Calu3 (cell line): ENCODE measurements at regions of chr3 and their contacts with region 1.

Region 1: DNA sequence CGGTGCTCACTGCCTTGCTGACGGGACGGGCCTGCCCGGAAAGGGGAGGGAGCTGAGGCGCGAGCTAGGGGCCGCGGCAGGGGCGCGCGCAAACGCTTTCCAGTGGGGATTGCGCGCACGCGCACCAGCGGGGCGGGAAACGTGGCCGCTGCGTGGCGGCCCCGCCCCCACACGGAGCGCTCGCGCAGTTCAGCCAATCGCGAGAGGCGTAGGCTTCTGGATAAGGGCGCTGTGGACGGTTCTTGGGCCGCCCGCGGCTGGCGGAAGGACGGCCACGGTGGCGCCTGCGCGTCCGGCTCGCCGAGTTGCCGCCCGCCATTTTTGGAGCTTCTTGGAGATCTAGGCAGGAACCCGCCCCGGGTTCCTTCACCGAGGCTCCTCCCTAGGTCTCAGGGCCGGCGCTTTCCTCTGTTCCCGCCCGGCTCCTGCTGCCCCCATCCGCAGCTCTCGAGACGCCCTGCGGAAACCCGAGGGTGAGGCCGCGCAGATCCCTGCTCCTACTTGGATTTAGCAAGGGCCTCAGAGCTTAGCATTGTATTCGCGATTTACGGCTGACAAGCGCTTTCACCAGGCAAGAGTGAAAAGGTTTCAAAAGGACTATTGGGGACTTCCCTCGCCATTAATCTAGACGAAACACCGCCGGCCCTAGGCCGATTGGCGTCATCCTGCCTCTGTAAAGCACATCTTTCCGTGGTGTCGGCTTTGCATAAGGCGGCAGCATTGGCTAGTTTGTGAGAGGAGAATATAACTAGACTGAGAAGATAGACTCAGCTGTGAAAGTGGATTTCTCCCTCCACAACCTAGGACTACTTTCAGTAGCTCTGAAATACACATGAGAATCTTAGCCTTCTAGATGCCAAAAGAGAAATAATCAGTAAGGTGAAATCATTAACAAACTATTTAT is 496 bp upstream of the STAG1 start:
- DNase-seq: peak; percentile 100
- H3K4me3 Mint-ChIP-seq: peak overlapping the region; percentile 73
- H3K27ac Mint-ChIP-seq: peak overlapping the region; percentile 67
- H3K4me1 Mint-ChIP-seq: peaks cover 44% of the 10 kb centered on the region
- H3K27me3 Mint-ChIP-seq: no peaks in the 10 kb centered on the region
- CTCF ChIP-seq: no peak

Region 2: DNA sequence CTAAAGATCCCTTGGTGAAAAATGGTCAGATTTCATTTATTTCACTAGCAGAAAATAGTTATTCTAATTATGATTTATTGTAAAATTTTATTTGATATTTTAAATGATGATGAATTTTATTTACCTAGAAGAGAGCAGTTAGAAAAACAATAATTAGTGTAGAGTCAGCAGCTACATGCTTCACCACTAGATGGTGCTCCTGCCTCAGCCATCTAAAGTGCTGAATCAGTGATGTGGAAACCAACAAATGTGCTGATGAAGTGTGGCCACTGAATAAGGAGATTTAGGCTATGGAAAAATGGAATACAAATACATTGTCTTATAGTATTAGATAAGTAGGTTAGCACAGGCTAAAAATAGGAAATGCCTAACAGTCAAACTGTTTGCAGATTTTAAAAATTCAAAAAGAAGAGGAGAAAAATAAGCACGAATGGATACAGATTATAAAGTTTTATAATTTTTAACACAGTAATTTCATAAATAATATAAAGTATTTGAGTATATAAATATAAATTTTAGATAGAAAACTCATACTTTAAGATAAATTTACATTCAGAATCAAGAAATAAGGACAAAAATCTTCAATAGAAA is 677.4 kb before region 1 on chr3:
- CTCF ChIA-PET with region 1: interaction called, 16 read pairs
- intact Hi-C with region 1: loop called (anchors 2 kb)
- DNase-seq: peak; percentile 81
- H3K4me3 Mint-ChIP-seq: no peak overlapping the region
- H3K27ac Mint-ChIP-seq: no peak overlapping the region
- H3K4me1 Mint-ChIP-seq: peaks cover 8% of the 10 kb centered on the region
- H3K27me3 Mint-ChIP-seq: no peaks in the 10 kb centered on the region
- CTCF ChIP-seq: peak; percentile 85

Region 3: DNA sequence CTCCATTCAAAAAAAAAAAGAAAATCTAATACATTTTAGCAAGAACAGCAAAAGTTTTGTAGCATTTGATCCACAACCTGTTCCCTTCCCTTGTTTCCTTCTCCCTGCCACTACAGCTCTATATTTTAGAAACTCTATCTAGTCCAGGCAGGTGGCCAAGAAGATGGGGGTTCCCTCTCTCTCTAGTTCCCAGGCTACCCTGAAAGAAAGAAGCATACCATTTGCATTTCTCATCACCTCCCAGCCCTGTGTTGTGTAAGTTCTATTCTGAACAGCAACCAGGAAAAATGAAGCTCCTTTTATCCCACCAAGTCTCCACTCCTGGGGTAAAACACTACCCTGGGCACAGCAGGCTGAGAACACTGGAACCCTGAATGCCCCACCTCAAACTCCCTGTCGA is 402.5 kb before region 1 on chr3:
- CTCF ChIA-PET with region 1: interaction called, 12 read pairs
- intact Hi-C with region 1: no loop called
- DNase-seq: peak; percentile 50
- H3K4me3 Mint-ChIP-seq: no peak overlapping the region
- H3K27ac Mint-ChIP-seq: no peak overlapping the region
- H3K4me1 Mint-ChIP-seq: peaks cover 19% of the 10 kb centered on the region
- H3K27me3 Mint-ChIP-seq: no peaks in the 10 kb centered on the region
- CTCF ChIP-seq: no peak

Region 4: DNA sequence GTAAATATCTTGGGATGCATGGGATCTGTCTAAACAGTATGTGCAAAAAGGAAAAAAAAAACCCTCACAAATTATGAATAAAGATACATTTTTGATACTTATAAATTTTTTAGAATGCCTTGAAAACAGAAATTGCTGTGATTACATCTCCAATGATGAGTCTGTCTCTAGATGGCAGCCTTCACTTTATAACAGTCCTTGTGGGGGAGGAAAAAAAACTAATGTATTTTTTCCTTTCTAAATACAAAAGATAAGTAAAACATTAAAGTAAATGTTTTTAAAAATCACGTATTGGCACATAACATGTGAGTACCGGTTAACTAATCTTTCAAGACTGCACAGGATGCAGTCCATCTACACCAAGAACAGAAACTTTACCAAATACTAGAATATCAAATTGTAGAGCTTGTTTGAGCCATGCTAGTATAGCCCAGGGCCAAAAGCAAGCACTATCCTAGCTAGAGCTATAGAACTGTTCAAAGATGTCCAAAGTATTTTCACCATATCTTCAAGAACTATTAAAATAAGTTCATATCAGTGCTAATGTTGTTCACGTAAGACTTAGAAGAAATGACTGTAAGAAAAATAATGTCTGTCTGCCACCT is 206.9 kb before region 1 on chr3:
- CTCF ChIA-PET with region 1: interaction called, 170 read pairs
- intact Hi-C with region 1: loop called (anchors 1 kb)
- DNase-seq: peak; percentile 19
- H3K4me3 Mint-ChIP-seq: no peak overlapping the region
- H3K27ac Mint-ChIP-seq: peak overlapping the region; percentile 40
- H3K4me1 Mint-ChIP-seq: peaks cover 31% of the 10 kb centered on the region
- H3K27me3 Mint-ChIP-seq: no peaks in the 10 kb centered on the region
- CTCF ChIP-seq: peak; percentile 36

Region 5: DNA sequence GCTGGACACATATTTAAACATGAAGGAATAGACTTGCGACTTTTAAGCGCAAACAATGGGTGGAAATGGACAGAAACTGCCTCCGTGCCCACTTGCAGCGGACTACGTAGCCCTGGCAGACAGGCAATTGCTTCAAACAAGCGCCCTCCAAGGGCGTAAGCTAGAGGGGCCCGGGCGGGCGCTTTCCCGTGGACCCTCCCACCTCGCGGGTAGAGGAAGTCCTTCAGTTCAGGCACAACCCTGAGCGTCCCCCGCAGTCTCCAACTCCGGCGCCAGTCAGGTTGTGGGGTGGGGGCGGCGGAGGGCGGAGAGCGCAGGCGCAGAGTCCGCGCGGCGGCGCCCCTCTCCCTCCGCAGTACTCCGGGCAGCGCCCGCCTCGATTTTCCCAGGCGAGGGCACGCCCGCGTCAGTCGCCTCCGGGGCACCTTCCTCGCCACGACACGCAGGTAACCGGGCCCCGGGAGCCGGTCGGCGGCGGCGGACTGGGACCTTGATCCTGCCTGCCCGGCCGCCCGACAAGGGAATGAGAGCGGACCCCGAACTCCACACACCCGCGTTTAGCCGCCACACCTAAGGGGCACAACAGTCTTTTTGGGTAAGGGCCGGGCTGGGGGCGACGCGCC is 66.2 kb after region 1 on chr3 and contains the start of gene SLC35G2:
- CTCF ChIA-PET with region 1: interaction called, 5 read pairs
- intact Hi-C with region 1: loop called (anchors 1 kb)
- DNase-seq: peak; percentile 84
- H3K4me3 Mint-ChIP-seq: peak within 1 kb of the TSS; percentile 90
- H3K27ac Mint-ChIP-seq: peak within 1 kb of the TSS; percentile 92
- H3K4me1 Mint-ChIP-seq: peaks cover 27% of the 10 kb centered on the region
- H3K27me3 Mint-ChIP-seq: no peaks in the 10 kb centered on the region
- CTCF ChIP-seq: no peak
- total RNA-seq, gene SLC35G2: 31.0 and 31.4 TPM in 2 replicates

Region 6: GRCh38 chr3:136955813-136956212 is 203.1 kb after region 1 on chr3:
- CTCF ChIA-PET with region 1: interaction called, 18 read pairs
- intact Hi-C with region 1: loop called (anchors 5 kb)
- DNase-seq: peak; percentile 79
- H3K4me3 Mint-ChIP-seq: peak overlapping the region; percentile 47
- H3K27ac Mint-ChIP-seq: peak overlapping the region; percentile 89
- H3K4me1 Mint-ChIP-seq: peaks cover 89% of the 10 kb centered on the region
- H3K27me3 Mint-ChIP-seq: no peaks in the 10 kb centered on the region
- CTCF ChIP-seq: no peak